Motor neuron (in vitro differentiated cells): ENCODE measurements at regions of chr10 and their contacts with region 1.

Region 1: GRCh38 chr10:78165617-78166016 is 132.0 kb downstream of the RPS24 start:
- ATAC-seq: peak in 7 of 8 experiments; percentile 26 to 82 (median 57)
- H3K4me3 ChIP-seq: no peak overlapping the region
- H3K27ac ChIP-seq: no peak overlapping the region
- H3K4me1 ChIP-seq: peaks cover 8 to 12% of the 10 kb centered on the region in 2 donors

Region 2: DNA sequence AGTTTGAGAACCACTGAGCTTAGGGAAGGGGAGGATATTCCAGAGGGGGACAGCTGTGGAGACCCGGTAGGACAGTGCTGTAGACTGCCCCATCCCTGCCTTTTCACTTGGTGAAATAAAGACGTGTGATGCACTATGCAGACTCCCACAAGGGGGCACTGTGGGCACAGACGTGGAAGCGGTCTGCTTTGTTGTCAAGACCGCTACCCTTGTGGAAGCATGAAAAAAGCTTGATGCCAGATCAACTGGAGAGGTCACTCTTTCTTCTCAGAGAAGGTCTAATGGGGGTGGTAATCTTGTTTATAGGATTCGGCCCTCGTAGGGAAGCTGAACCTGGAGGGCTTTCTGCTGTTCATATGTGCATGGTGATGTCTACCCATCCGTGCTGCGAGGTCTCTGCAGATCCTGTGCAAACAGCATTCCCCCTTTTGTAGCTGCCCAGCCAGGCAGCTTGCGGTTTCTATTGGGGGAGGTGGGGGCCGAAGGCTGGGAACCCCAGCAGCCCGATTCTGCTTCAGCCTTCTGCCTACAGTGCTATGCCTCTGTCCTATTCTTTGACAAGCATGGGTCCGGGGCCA is 118.2 kb before region 1 on chr10:
- in situ Hi-C with region 1: loop called in 1 of 9 experiments (anchors 10 kb)
- ATAC-seq: peak; percentile 32 to 94 (median 84)
- H3K4me3 ChIP-seq: no peak overlapping the region
- H3K27ac ChIP-seq: peak overlapping the region; percentile 24 to 75
- H3K4me1 ChIP-seq: peaks cover 10 to 12% of the 10 kb centered on the region in 2 donors

Region 3: GRCh38 chr10:78432583-78432982 is 267.0 kb after region 1 on chr10:
- in situ Hi-C with region 1: no loop called
- ATAC-seq: peak in 5 of 8 experiments; percentile 15 to 50 (median 29)
- H3K4me3 ChIP-seq: no peak overlapping the region
- H3K27ac ChIP-seq: no peak overlapping the region
- H3K4me1 ChIP-seq: peaks cover 37 to 40% of the 10 kb centered on the region in 2 donors